ENCODE measurements at regions of chr7 and their contacts with region 1.

Region 1: DNA sequence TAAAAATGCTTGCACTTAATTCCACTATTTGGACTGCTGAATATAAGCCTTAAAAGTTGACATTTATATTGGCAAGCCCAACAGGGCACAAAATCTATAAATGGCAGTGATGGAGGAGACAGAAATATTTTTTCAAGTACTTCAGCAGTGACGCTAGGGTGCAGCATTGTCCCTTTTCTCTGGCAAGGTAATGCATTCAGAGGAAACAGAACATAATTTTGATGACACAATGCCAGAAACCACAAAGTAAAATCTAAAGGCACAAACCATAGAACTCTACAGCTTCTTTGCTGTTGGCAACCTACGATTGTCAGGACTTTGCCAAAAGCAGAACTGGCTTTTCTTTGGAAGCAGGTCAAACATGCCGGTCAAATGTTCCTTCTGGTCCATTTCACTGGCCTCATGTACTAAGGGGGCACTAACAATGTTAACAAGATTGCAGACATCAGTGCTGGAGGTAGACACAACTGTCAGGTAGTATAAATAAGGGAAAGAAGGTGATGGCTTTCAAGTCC is 30.9 kb upstream of the FAM133B start:
- DNase-seq: peak; percentile 79
- ATAC-seq: peak; percentile 79
- H3K4me3 ChIP-seq: peak overlapping the region; percentile 12; the same call in 1 of the 2 replicates
- H3K27ac ChIP-seq: peak overlapping the region; percentile 75
- H3K4me1 ChIP-seq: peaks cover 16% of the 10 kb centered on the region
- H3K27me3 ChIP-seq: no peaks in the 10 kb centered on the region
- CTCF ChIP-seq: peak; percentile 64 to 94 (median 76); a peak in 5 of 6 replicates
- EP300 ChIP-seq: no peak
- POLR2A ChIP-seq: no peak
- RAD21 ChIP-seq: peak; percentile 95

Region 2: DNA sequence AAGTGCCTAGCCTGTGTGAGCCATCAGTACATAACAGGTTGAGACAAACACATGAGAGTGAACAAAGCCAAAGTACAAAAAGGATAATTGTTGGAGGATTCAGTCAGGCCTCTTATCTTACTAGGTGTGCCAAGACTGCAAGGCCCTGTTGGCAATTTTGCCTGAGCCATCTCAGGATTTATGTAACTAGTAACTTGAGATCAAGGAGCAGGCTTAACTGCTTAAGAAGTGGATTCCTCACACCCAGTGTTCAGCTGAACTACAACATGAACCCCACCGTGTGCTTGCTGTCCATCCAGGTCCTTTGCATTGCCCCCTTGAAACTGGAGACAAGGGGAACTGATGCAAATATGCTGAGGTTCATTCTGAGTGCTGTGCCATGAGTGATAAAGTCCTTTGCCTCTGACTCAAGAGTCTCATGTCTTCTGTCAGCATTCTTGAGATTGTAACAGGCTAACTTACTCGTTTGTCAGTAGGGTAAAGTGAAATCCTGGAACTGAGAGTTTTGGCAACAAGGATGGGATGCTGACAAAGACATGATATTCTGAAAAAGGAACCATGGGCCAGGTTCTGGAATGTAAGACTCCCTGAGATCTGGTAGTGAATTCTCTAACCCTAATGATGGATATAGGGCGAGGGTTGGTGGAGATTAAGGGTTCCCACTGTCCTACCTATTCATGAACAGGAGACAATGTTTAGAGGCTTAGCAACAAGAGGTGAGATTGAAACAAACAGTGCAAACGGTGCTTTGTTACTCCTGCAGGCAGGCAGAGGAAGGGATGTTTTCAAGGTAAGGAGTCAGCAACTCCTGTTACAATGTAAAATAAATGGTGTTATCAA is 217.9 kb before region 1 on chr7:
- CTCF ChIA-PET with region 1: no interaction called
- POLR2A ChIA-PET with region 1: no interaction called
- RAD21 ChIA-PET with region 1: no interaction called
- SMC1A ChIA-PET with region 1: no interaction called
- in situ Hi-C with region 1: no loop called
- intact Hi-C with region 1: no loop called
- DNase-seq: no peak
- ATAC-seq: no peak
- H3K4me3 ChIP-seq: no peak overlapping the region
- H3K27ac ChIP-seq: no peak overlapping the region
- H3K4me1 ChIP-seq: no peaks in the 10 kb centered on the region
- H3K27me3 ChIP-seq: no peaks in the 10 kb centered on the region
- CTCF ChIP-seq: no peak
- EP300 ChIP-seq: no peak
- POLR2A ChIP-seq: no peak
- RAD21 ChIP-seq: no peak

Region 3: GRCh38 chr7:92517631-92518030 is 103.5 kb before region 1 on chr7:
- CTCF ChIA-PET with region 1: no interaction called
- POLR2A ChIA-PET with region 1: no interaction called
- RAD21 ChIA-PET with region 1: no interaction called
- SMC1A ChIA-PET with region 1: no interaction called
- in situ Hi-C with region 1: no loop called
- intact Hi-C with region 1: no loop called
- DNase-seq: no peak
- ATAC-seq: no peak
- H3K4me3 ChIP-seq: no peak overlapping the region
- H3K27ac ChIP-seq: no peak overlapping the region
- H3K4me1 ChIP-seq: no peaks in the 10 kb centered on the region
- H3K27me3 ChIP-seq: no peaks in the 10 kb centered on the region
- CTCF ChIP-seq: no peak
- EP300 ChIP-seq: no peak
- POLR2A ChIP-seq: no peak
- RAD21 ChIP-seq: no peak

Region 4: DNA sequence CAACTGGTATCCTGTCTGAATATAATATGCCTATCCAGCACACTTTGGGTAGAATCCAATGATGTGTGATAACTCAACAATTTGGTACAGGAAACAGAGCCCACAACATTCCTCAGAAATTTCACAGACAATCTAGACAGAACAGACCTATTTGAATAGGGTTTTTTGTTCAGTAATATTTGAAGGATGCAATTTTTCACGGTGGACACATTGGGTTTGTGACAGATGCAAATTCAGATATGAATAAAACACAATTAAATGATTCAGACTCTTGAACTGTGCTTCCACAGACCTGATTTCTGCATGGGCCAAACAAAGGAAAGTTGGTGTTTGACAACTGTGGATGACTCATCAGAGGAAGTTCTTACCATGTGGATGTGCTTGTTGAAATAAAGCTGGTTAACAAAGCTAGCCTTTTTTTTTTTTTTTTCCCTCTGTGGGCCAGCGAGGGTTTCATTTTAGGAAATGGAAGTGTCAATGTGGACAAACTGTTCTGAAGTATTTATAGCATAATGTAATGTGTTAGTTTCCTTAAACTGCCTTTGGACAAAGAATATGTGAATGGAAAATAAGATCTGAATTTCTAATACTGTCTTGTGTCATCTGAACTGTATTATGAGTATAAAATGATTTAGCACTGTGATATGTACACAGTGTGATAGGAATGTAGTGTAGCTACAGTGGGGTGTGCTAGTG is 12.3 kb after region 1 on chr7:
- CTCF ChIA-PET with region 1: interaction called, 9 read pairs
- POLR2A ChIA-PET with region 1: interaction called, 4 read pairs
- RAD21 ChIA-PET with region 1: interaction called, 30 read pairs
- SMC1A ChIA-PET with region 1: interaction called, 37 read pairs
- in situ Hi-C with region 1: no loop called
- intact Hi-C with region 1: loop called (anchors 2 kb)
- DNase-seq: no peak
- ATAC-seq: peak; percentile 16
- H3K4me3 ChIP-seq: no peak overlapping the region
- H3K27ac ChIP-seq: peak overlapping the region; percentile 61
- H3K4me1 ChIP-seq: peaks cover 48% of the 10 kb centered on the region
- H3K27me3 ChIP-seq: no peaks in the 10 kb centered on the region
- CTCF ChIP-seq: no peak
- EP300 ChIP-seq: peak in 1 of 2 experiments; percentile 60; a peak in 2 of 4 replicates
- POLR2A ChIP-seq: no peak
- RAD21 ChIP-seq: no peak

Region 5: DNA sequence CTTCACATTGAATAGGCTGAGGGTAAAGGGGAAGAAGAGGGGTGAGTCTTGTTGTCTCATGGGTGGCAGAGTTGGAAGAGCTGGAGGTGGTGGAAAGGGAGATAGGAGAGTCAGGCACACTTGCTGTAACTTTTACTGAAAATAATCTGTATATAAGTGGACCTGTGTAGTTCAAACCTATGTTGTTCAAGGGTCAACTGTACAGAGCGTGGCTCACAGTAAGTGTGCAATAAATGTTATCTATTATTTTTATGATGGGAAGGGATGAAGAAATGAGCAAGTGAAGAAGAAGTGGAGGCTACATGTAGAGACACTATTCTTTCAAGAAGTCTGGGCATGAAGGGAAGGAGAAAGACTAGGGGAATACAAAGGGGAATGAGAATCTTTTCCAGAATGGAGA is 40.6 kb after region 1 on chr7:
- CTCF ChIA-PET with region 1: interaction called, 4 read pairs
- POLR2A ChIA-PET with region 1: no interaction called
- RAD21 ChIA-PET with region 1: interaction called, 3 read pairs
- SMC1A ChIA-PET with region 1: interaction called, 5 read pairs
- in situ Hi-C with region 1: no loop called
- intact Hi-C with region 1: loop called (anchors 5 kb)
- DNase-seq: no peak
- ATAC-seq: no peak
- H3K4me3 ChIP-seq: no peak overlapping the region
- H3K27ac ChIP-seq: no peak overlapping the region
- H3K4me1 ChIP-seq: no peaks in the 10 kb centered on the region
- H3K27me3 ChIP-seq: no peaks in the 10 kb centered on the region
- CTCF ChIP-seq: no peak
- EP300 ChIP-seq: no peak
- POLR2A ChIP-seq: no peak
- RAD21 ChIP-seq: no peak

Region 6: DNA sequence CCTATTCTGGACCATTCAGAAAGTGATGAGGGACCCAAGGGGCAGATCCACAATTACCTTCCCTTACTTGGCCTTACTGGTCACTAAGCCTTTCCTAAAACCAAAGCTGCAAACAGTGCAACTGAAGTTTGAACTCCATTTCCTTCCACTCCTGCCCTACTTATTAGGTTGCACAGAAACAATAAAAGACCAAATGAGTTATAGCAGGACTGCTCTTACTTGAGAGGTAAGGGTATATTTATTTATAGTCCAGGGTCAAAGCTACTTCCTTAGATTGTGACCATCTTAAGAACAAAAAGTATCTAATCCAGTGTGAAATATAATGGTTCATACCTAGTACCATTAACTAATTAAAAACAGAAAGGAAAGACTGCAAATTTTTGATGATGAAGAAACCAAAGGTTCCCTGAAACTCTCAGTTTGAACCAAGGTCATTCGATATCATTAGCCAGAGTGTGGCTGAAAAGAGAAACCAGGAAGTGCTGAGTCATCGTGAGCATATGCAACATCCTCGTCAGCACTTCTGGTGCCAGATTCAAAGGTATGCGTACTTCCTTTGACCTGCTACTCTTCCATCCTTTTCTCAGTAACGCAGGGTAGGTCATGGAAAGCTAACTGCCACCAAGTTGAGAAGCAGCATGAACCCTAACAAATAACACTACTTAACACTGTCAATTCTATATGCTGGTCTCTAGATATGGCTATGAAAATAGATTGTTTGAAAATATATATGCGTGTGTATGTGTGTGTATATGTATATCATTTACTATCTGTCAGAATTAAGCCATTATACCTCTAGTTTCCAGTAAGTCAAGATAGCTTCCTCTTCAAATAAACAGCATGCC is 188.5 kb after region 1 on chr7:
- CTCF ChIA-PET with region 1: interaction called, 4 read pairs
- POLR2A ChIA-PET with region 1: no interaction called
- RAD21 ChIA-PET with region 1: interaction called, 6 read pairs
- SMC1A ChIA-PET with region 1: no interaction called
- in situ Hi-C with region 1: no loop called
- intact Hi-C with region 1: loop called (anchors 1 kb)
- DNase-seq: peak; percentile 92
- ATAC-seq: peak; percentile 76
- H3K4me3 ChIP-seq: peak overlapping the region; percentile 37; the same call in 1 of the 2 replicates
- H3K27ac ChIP-seq: peak overlapping the region; percentile 87
- H3K4me1 ChIP-seq: peaks cover 45% of the 10 kb centered on the region
- H3K27me3 ChIP-seq: no peaks in the 10 kb centered on the region
- CTCF ChIP-seq: no peak
- EP300 ChIP-seq: peak; percentile 89 to 96; a peak in 3 of 4 replicates
- POLR2A ChIP-seq: peak; percentile 54; the same call in 1 of the 2 replicates
- RAD21 ChIP-seq: no peak

Region 7: DNA sequence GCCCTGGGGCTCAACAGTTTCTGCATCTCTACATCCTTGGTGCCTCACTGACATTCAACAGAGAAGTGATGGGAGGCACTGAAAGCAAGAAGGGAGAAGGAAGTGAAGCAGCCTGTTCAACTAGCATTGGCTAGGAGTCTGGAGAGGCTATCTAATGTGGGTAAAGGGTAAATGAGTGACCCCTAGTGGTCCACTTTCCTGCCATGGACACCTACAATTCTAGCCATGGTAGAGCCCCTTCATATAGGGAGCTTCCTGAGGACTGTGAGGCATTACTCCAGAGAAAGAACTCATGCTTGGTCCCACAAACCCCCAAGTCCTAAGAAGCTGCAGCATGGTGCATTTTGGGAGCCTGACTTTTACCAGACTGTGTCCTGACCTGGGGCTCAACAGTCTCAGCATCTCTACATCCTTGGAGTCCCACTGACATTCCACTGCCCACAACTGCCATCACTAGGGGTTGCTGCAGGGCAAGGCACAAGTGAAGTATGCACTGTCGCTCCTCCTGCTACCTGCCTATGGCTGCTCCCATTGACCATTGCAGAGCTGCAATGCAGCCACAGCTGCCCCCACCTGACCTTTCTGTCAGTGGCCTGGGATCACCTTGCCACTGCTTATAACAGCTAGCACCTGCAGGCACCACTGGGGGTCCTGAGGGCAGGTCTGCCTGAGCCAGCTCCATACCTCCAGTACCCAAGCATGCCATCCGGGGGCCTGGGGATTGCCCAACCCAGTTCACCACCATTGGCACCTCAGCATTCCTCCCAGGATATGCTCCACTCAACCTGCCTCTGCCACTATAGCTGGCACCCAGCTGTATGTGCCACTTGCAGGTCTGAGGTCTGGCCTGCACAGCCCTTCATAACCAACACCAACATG is 259.4 kb after region 1 on chr7:
- CTCF ChIA-PET with region 1: interaction called, 3 read pairs
- POLR2A ChIA-PET with region 1: interaction called, 3 read pairs
- RAD21 ChIA-PET with region 1: interaction called, 3 read pairs
- SMC1A ChIA-PET with region 1: interaction called, 5 read pairs
- in situ Hi-C with region 1: no loop called
- intact Hi-C with region 1: loop called (anchors 5 kb)
- DNase-seq: no peak
- ATAC-seq: peak; percentile 83
- H3K4me3 ChIP-seq: no peak overlapping the region
- H3K27ac ChIP-seq: no peak overlapping the region
- H3K4me1 ChIP-seq: no peaks in the 10 kb centered on the region
- H3K27me3 ChIP-seq: no peaks in the 10 kb centered on the region
- CTCF ChIP-seq: peak in 2 of 3 experiments; percentile 20 to 31; a peak in 3 of 6 replicates
- EP300 ChIP-seq: no peak
- POLR2A ChIP-seq: no peak
- RAD21 ChIP-seq: peak; percentile 56

Region 8: GRCh38 chr7:93055543-93056107 is 434.5 kb after region 1 on chr7:
- CTCF ChIA-PET with region 1: interaction called, 8 read pairs
- POLR2A ChIA-PET with region 1: no interaction called
- RAD21 ChIA-PET with region 1: interaction called, 4 read pairs
- SMC1A ChIA-PET with region 1: interaction called, 12 read pairs
- in situ Hi-C with region 1: loop called (anchors 5 kb)
- intact Hi-C with region 1: loop called (anchors 1 kb)
- DNase-seq: no peak
- ATAC-seq: peak; percentile 83
- H3K4me3 ChIP-seq: no peak overlapping the region
- H3K27ac ChIP-seq: no peak overlapping the region
- H3K4me1 ChIP-seq: no peaks in the 10 kb centered on the region
- H3K27me3 ChIP-seq: no peaks in the 10 kb centered on the region
- CTCF ChIP-seq: peak; percentile 39 to 73 (median 57); a peak in 5 of 6 replicates
- EP300 ChIP-seq: no peak
- POLR2A ChIP-seq: no peak
- RAD21 ChIP-seq: peak; percentile 86